ENCODE measurements at regions of chr10 and their contacts with region 1.

Region 1: GRCh38 chr10:75099952-75100763 is 11.3 kb upstream of the SAMD8 start:
- DNase-seq: no peak
- H3K4me3 ChIP-seq: no peak overlapping the region
- CTCF ChIP-seq: peak; percentile 97

Region 2: GRCh38 chr10:74262856-74263255 is 837.3 kb before region 1 on chr10:
- CTCF ChIA-PET with region 1: interaction called, 10 read pairs
- POLR2A ChIA-PET with region 1: no interaction called
- DNase-seq: no peak
- H3K4me3 ChIP-seq: no peak overlapping the region
- CTCF ChIP-seq: no peak

Region 3: GRCh38 chr10:75111367-75111906 is 11.3 kb after region 1 on chr10 and contains the start of gene SAMD8:
- CTCF ChIA-PET with region 1: interaction called, 12 read pairs
- POLR2A ChIA-PET with region 1: no interaction called
- DNase-seq: peak; percentile 71
- H3K4me3 ChIP-seq: peak within 1 kb of the TSS; percentile 82
- CTCF ChIP-seq: no peak

Region 4: GRCh38 chr10:75210282-75211006 is 110.3 kb after region 1 on chr10 and contains the start of gene VDAC2:
- CTCF ChIA-PET with region 1: no interaction called
- POLR2A ChIA-PET with region 1: no interaction called
- DNase-seq: no peak
- H3K4me3 ChIP-seq: peak within 1 kb of the TSS; percentile 87
- CTCF ChIP-seq: no peak